ENCODE measurements at regions of chr11 and their contacts with region 1.

Region 1: DNA sequence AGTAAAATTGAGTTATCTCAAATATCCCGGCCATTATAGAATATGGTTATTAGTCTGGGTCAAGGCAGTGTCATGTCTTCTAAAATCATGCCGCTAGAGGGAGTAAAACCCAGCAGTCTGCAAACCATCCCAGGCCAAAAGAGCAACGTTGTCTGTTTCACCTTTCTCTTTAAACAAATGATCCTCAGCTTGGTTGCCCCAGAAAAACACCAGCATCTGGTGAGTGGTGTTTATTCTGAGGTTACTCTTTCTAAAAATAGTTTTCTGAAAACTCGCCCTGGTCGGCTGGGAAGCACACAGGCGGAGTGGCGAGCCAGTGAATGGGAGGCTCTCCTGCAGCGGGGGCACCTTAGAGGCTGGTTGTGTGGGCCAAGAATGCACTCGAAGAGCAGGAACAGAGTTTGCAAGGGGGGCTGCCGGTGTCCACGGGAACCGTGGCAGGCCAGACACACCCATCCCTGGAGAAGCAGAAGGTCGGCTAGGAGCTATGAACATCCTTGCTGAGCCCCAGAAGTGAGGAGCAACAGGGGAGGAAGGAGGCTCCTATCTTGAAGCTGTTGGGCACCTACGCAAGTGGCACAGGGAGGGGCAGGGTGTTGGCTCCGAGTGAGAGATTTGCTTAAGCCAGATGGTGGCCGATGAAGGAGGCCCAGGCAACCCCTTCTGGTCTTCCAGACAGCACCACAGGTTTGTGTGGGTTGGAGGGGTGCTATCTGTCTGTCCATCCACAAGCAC is 297.1 kb downstream of the ETS1 start:
- DNase-seq: peak; percentile 50
- ATAC-seq: peak; percentile 95

Region 2: DNA sequence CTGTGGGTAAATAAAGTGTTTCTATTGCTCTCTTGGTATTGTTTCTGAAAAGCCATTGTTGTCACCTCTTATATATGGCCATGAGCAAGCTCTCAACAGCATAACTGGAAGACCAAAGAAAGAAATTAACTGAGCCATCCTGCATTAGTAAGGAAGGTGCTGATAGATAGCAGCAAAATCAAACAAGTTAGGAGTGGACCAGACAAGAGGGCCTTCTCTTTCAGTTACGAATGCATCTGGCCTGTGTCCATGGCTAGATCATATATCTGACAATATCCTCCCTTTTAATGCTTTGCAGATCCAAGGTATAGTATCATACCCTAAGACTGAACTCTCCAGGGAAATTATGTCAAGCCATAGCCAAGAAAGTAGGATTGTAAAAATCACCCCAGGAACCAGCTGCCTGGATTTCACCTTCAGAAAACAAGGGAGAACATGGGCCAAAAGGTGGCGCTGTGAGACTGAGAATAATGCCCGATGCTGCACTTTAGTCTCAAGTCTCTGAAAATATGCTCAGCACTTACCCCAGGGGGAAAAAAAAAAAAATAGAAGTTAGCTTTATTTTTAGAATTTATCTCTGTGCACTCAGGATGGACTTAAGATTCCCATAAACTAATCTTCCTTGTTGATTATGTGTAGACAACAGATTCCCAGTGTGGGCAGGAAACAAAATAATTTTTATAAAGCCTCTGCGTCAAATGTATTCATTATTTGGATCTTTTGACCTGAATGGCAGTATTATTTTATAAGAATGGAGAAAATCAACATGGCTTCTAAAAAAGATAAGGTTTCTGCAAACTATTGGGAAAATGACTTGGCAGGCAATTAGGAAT is 118.0 kb before region 1 on chr11:
- intact Hi-C with region 1: loop called (anchors 5 kb)
- DNase-seq: peak; percentile 86
- ATAC-seq: peak; percentile 93

Region 3: GRCh38 chr11:128222245-128222884 is 67.9 kb before region 1 on chr11:
- intact Hi-C with region 1: no loop called
- DNase-seq: no peak
- ATAC-seq: no peak

Region 4: GRCh38 chr11:128235958-128236357 is 54.3 kb before region 1 on chr11:
- intact Hi-C with region 1: no loop called
- DNase-seq: no peak
- ATAC-seq: no peak

Region 5: DNA sequence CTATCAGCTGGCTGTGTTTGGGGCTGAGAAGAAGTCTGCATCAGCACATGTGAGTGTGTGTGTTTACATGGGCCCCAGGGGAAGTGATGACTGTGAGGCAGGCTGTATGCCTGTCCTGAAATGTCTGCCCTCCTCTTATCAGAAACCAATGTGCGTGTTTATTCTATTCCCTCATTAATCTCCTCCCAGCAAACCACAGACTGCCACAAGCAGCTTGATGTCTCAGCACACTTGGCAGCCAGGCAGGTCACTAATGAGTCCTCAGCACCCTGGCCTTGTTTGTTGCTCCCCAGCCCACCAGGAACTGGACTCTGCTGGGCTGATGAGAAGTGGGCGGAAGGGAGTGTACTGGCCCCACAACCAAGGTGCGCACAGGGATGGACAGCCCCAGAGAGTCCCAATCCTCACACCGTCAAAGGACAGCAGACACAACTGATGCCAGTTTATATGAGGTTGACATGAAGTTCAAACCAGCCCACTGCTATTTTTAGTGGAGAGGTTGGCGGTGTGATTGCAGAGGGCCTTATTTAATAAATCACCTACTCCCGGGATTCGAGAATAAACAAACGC is 71.3 kb after region 1 on chr11:
- intact Hi-C with region 1: loop called (anchors 5 kb)
- DNase-seq: no peak
- ATAC-seq: peak; percentile 69

Region 6: GRCh38 chr11:128472128-128473089 is 182.1 kb after region 1 on chr11:
- intact Hi-C with region 1: loop called (anchors 10 kb)
- DNase-seq: no peak
- ATAC-seq: no peak

Region 7: DNA sequence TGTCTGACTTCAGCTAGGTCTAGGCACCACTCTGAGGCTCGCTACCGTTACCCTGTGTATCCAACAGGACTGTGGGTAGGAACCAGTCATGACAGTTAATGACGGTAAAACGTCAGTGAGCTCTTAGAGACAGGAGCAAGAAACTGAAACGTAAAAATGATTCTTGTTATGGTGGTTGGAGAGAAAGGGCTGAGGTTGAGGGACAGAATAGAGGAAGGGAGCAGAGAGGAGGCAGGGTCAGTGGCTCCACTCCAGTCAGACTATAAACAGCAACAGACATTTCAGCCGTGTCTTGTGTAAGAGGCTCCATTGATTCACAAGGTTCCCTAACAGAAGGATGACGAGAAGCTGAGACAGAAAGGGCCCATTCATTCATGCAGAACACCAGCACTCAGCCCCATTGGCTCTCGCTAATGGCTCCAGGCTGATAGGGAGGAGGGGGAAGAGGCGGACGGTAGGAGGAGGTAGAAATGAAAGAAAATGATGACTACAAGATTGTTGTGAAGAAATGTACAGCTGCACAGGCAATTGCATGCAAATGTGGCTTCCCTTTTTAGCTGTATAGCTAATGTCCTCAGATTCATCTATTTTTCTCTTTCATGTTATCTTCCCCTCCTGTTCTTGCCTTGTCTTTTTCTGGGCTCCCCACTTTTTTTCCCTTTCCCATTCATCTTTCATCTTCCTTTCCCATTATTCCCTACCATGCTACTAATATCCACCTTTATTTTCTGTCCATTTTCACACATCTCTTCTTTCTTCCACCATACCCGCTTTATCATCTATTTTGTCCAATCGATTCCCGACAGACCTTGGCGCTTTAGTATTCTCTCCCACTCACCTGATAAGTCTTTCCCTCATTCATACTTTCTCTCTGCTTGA is 262.7 kb after region 1 on chr11:
- intact Hi-C with region 1: loop called (anchors 10 kb)
- DNase-seq: no peak
- ATAC-seq: peak; percentile 7

Region 8: DNA sequence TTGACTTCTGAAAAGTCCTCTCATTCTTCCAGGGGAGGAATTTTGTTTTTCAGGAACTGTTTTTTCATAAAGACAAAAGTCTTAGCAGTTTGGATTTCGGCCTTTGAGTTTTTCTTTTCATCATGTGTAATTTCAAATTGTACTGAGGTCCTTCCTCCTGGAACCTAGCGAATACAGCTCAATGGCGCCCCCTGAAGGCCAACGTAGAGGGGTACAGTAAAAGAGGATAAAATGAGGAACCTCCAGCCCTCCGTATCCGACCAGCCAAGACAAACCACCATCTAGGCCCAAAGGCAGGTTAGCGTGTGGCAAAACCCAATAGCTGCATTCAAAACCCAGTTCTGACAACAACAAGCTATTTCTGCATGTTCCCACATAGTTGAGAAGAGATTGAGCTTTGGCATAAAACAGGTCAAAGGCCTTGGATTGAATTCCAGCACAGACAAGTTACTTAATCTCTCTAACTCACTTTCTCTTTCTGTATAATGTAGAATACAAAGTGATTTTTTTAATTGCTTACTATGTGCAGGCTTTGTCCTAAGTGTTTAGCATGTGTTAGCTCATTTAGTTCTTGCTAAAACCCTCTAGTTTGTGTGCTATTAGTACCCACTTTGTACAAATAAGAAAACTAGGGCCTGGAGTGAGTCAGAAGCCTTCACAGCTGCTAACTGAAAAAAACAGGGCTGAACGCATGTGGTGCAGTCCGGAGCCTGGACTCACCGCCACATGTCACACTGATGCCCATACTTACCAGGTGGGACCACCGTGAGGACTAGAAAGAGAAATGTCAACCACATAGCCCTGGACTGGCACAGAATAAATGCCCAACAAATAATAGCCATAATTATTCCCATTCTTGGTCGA is 340.3 kb after region 1 on chr11:
- intact Hi-C with region 1: loop called (anchors 2 kb)
- DNase-seq: peak; percentile 89
- ATAC-seq: peak; percentile 97

Region 9: GRCh38 chr11:128831174-128832120 is 541.2 kb after region 1 on chr11:
- intact Hi-C with region 1: loop called (anchors 5 kb)
- DNase-seq: peak; percentile 87
- ATAC-seq: peak; percentile 91